HEK293T (cell line): ENCODE measurements at regions of chr7 and their contacts with region 1.

Region 1: GRCh38 chr7:156969972-156970420 is 20.5 kb downstream of the NOM1 start:
- DNase-seq: no peak

Region 2: GRCh38 chr7:157273208-157274093 is 303.5 kb after region 1 on chr7:
- CTCF ChIA-PET with region 1: interaction called, 11 read pairs
- POLR2A ChIA-PET with region 1: no interaction called
- DNase-seq: peak; percentile 98